ENCODE measurements at regions of chr2 and their contacts with region 1.

Region 1: GRCh38 chr2:12416600-12416999 is 300.1 kb upstream of the TRIB2 start:
- DNase-seq: peak in 8 of 9 donors; percentile 26 to 72 (median 64)
- ATAC-seq: peak; percentile 83
- H3K4me3 ChIP-seq: no peak overlapping the region
- H3K4me3 Mint-ChIP-seq: peak overlapping the region in 9 of 10 donors; percentile 18 to 75 (median 30)
- H3K27ac ChIP-seq: no peak overlapping the region
- H3K27ac Mint-ChIP-seq: peak overlapping the region; percentile 24 to 77 (median 52)
- H3K4me1 ChIP-seq: peaks cover 16 to 23% of the 10 kb centered on the region in 2 donors
- H3K4me1 Mint-ChIP-seq: peaks cover 27 to 82% (median 66%) of the 10 kb centered on the region in 7 donors
- H3K27me3 ChIP-seq: no peaks in the 10 kb centered on the region
- H3K27me3 Mint-ChIP-seq: no peaks in the 10 kb centered on the region

Region 2: GRCh38 chr2:11621410-11621809 is 795.2 kb before region 1 on chr2:
- CTCF ChIA-PET with region 1: no interaction called
- POLR2A ChIA-PET with region 1: no interaction called
- intact Hi-C with region 1: no loop called
- DNase-seq: no peak
- ATAC-seq: no peak
- H3K4me3 ChIP-seq: no peak overlapping the region
- H3K4me3 Mint-ChIP-seq: no peak overlapping the region
- H3K27ac ChIP-seq: no peak overlapping the region
- H3K27ac Mint-ChIP-seq: no peak overlapping the region
- H3K4me1 ChIP-seq: no peaks in the 10 kb centered on the region
- H3K4me1 Mint-ChIP-seq: no peaks in the 10 kb centered on the region
- H3K27me3 ChIP-seq: no peaks in the 10 kb centered on the region
- H3K27me3 Mint-ChIP-seq: no peaks in the 10 kb centered on the region

Region 3: DNA sequence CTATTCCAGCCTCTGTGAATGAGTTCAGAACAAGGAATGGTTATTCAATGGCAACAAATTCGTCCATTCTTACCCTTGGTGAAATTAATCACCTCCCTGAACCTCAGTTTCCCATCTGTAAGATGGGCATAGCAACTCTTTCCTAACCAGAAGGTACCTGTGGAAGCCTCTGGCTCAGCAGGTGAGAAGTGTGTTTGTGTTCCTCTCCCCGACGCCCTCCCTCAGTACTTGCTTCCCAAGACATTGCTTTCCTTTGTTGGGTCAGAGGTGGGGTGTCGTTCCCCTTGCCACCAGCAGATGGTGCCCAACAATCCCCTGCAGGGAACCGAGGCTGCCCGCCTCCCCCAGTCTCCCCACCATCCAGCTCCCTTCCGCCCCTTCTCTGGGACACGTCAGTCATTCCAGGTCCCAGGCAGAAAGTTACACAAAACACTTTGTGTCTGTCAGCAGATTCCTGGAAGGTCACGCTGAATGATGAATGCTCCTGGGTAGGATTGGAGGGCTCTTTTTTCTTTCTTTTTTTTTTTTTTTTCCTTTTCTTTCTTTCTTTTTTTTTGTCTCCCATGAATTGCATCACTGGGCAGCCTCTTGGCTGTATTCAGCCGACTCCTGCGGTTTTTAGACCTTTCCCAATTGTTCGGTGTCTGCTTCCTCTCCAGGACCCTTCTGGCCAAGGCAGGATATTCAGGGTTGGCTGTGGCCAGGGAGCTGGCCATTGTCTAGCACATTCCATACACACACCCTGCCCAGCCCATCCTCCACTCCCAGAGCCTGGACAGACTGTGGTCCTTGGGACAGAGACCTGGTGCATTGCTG is 552.9 kb before region 1 on chr2:
- CTCF ChIA-PET with region 1: interaction called, 7 read pairs
- POLR2A ChIA-PET with region 1: no interaction called
- intact Hi-C with region 1: loop called (anchors 1 to 10 kb)
- DNase-seq: peak; percentile 38 to 71 (median 57)
- ATAC-seq: peak; percentile 88
- H3K4me3 ChIP-seq: peak overlapping the region; percentile 14
- H3K4me3 Mint-ChIP-seq: peak overlapping the region; percentile 28 to 71 (median 54)
- H3K27ac ChIP-seq: no peak overlapping the region
- H3K27ac Mint-ChIP-seq: peak overlapping the region in 2 of 9 donors; percentile 13 to 22
- H3K4me1 ChIP-seq: peaks cover 0 to 7% of the 10 kb centered on the region in 2 donors
- H3K4me1 Mint-ChIP-seq: peaks cover 8 to 14% (median 11%) of the 10 kb centered on the region in 7 donors
- H3K27me3 ChIP-seq: no peaks in the 10 kb centered on the region
- H3K27me3 Mint-ChIP-seq: peaks cover 0 to 28% (median 0%) of the 10 kb centered on the region in 5 donors

Region 4: DNA sequence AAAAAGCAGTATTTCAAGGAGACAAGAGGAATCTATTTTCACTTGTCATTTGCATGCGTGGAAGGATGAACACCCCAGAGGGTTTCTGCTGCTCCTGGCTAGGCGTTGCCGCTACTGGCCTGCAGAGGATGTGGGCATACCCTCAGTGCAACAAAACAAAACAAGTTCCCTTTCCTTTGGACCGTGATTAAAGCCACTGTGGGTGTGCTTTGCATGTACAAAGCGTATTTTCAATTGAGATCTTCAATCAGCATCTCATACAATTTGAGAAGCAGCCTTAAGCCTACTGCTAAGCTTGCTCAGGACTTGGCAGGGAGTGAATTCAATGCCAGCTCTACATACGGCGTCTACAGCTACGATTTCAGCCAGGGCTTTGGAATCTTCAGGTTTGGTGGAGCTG is 371.7 kb before region 1 on chr2:
- CTCF ChIA-PET with region 1: no interaction called
- POLR2A ChIA-PET with region 1: no interaction called
- intact Hi-C with region 1: no loop called
- DNase-seq: peak in 6 of 9 donors; percentile 69 to 88 (median 80)
- ATAC-seq: peak; percentile 93
- H3K4me3 ChIP-seq: peak overlapping the region; percentile 2
- H3K4me3 Mint-ChIP-seq: peak overlapping the region; percentile 31 to 78 (median 62)
- H3K27ac ChIP-seq: peak overlapping the region; percentile 9
- H3K27ac Mint-ChIP-seq: peak overlapping the region; percentile 21 to 88 (median 78)
- H3K4me1 ChIP-seq: peaks cover 16 to 42% of the 10 kb centered on the region in 2 donors
- H3K4me1 Mint-ChIP-seq: peaks cover 16 to 80% (median 65%) of the 10 kb centered on the region in 7 donors
- H3K27me3 ChIP-seq: no peaks in the 10 kb centered on the region
- H3K27me3 Mint-ChIP-seq: peaks cover 0 to 19% (median 0%) of the 10 kb centered on the region in 5 donors

Region 5: DNA sequence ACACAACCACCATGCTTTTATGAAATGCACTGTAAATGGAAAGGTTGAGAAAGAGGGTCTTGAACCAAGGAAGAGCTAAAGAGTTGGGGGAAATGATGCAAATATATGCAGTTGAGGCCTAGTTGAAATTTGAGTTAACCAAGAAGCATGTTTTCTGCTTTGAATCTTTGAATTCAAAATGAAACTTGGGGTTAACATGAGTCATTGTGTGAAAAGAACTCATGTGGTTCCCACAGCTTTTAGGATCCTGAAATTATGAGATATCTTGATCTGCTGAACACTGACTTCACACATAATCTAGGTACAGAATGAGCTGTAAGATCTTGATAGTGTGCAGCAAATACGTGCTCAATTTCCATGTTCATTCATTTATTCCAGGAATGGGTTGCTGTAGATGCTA is 122.7 kb before region 1 on chr2:
- CTCF ChIA-PET with region 1: no interaction called
- POLR2A ChIA-PET with region 1: no interaction called
- intact Hi-C with region 1: loop called in 1 of 2 experiments (anchors 5 kb)
- DNase-seq: no peak
- ATAC-seq: peak; percentile 27
- H3K4me3 ChIP-seq: no peak overlapping the region
- H3K4me3 Mint-ChIP-seq: peak overlapping the region in 5 of 10 donors; percentile 13 to 75 (median 60)
- H3K27ac ChIP-seq: no peak overlapping the region
- H3K27ac Mint-ChIP-seq: peak overlapping the region in 4 of 9 donors; percentile 18 to 90 (median 68)
- H3K4me1 ChIP-seq: peaks cover 0 to 16% of the 10 kb centered on the region in 2 donors
- H3K4me1 Mint-ChIP-seq: peaks cover 19 to 53% (median 40%) of the 10 kb centered on the region in 7 donors
- H3K27me3 ChIP-seq: no peaks in the 10 kb centered on the region
- H3K27me3 Mint-ChIP-seq: peaks cover 0 to 4% (median 0%) of the 10 kb centered on the region in 5 donors

Region 6: GRCh38 chr2:12442476-12442847 is 25.9 kb after region 1 on chr2:
- CTCF ChIA-PET with region 1: no interaction called
- POLR2A ChIA-PET with region 1: no interaction called
- intact Hi-C with region 1: no loop called
- DNase-seq: no peak
- ATAC-seq: peak; percentile 50
- H3K4me3 ChIP-seq: no peak overlapping the region
- H3K4me3 Mint-ChIP-seq: peak overlapping the region in 1 of 10 donors; percentile 29
- H3K27ac ChIP-seq: no peak overlapping the region
- H3K27ac Mint-ChIP-seq: peak overlapping the region in 3 of 9 donors; percentile 12 to 65 (median 24)
- H3K4me1 ChIP-seq: peaks cover 10 to 12% of the 10 kb centered on the region in 2 donors
- H3K4me1 Mint-ChIP-seq: peaks cover 16 to 31% (median 24%) of the 10 kb centered on the region in 7 donors
- H3K27me3 ChIP-seq: no peaks in the 10 kb centered on the region
- H3K27me3 Mint-ChIP-seq: no peaks in the 10 kb centered on the region

Region 7: GRCh38 chr2:12456293-12457151 is 39.9 kb after region 1 on chr2:
- CTCF ChIA-PET with region 1: no interaction called
- POLR2A ChIA-PET with region 1: no interaction called
- intact Hi-C with region 1: loop called in 1 of 2 experiments (anchors 5 kb)
- DNase-seq: peak; percentile 23 to 52 (median 41)
- ATAC-seq: peak; percentile 88
- H3K4me3 ChIP-seq: peak overlapping the region; percentile 50
- H3K4me3 Mint-ChIP-seq: peak overlapping the region; percentile 66 to 89 (median 79)
- H3K27ac ChIP-seq: peak overlapping the region; percentile 59
- H3K27ac Mint-ChIP-seq: peak overlapping the region; percentile 82 to 99 (median 91)
- H3K4me1 ChIP-seq: peaks cover 15 to 20% of the 10 kb centered on the region in 2 donors
- H3K4me1 Mint-ChIP-seq: peaks cover 29 to 57% (median 39%) of the 10 kb centered on the region in 7 donors
- H3K27me3 ChIP-seq: no peaks in the 10 kb centered on the region
- H3K27me3 Mint-ChIP-seq: no peaks in the 10 kb centered on the region

Region 8: GRCh38 chr2:12606472-12607000 is 189.9 kb after region 1 on chr2:
- CTCF ChIA-PET with region 1: no interaction called
- POLR2A ChIA-PET with region 1: no interaction called
- intact Hi-C with region 1: loop called in 1 of 2 experiments (anchors 1 kb)
- DNase-seq: peak in 3 of 9 donors; percentile 3 to 26 (median 12)
- ATAC-seq: no peak
- H3K4me3 ChIP-seq: no peak overlapping the region
- H3K4me3 Mint-ChIP-seq: no peak overlapping the region
- H3K27ac ChIP-seq: no peak overlapping the region
- H3K27ac Mint-ChIP-seq: no peak overlapping the region
- H3K4me1 ChIP-seq: peaks cover 0 to 10% of the 10 kb centered on the region in 2 donors
- H3K4me1 Mint-ChIP-seq: peaks cover 7 to 37% (median 25%) of the 10 kb centered on the region in 7 donors
- H3K27me3 ChIP-seq: no peaks in the 10 kb centered on the region
- H3K27me3 Mint-ChIP-seq: peaks cover 0 to 16% (median 0%) of the 10 kb centered on the region in 5 donors

Region 9: DNA sequence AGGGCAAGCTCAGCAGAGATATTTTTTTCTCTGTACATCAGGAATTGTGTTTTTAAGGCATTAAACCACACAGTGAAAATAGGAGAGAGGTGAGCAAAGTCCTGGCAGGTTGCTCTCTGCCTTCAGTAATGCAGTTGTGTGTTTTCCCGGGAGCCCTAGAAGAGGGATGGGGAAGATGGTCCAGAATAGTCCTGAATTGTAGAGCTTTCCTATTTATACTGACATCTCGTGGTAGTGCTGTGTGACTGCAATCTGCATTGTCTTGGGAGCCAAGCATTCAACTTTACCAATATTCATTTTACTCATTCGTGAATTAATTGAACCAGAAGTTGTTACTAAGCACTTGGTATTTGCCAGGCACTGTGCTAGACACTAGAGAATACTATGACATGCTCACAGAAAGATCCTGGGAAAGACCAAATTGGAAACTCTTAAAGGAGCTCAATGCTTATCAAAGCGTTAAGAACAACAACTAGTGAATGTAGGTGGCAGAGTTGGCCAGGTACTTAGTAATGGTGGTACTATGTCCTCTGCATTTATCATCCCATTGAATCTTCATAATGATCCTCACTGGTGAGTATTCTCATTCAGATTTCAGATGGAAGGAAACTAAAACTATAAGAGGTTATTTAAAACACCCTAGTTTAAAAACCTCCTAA is 514.7 kb after region 1 on chr2:
- CTCF ChIA-PET with region 1: interaction called, 6 read pairs
- POLR2A ChIA-PET with region 1: no interaction called
- intact Hi-C with region 1: loop called in 1 of 2 experiments (anchors 1 kb)
- DNase-seq: peak in 4 of 9 donors; percentile 17 to 33 (median 26)
- ATAC-seq: peak; percentile 63
- H3K4me3 ChIP-seq: no peak overlapping the region
- H3K4me3 Mint-ChIP-seq: no peak overlapping the region
- H3K27ac ChIP-seq: no peak overlapping the region
- H3K27ac Mint-ChIP-seq: no peak overlapping the region
- H3K4me1 ChIP-seq: no peaks in the 10 kb centered on the region
- H3K4me1 Mint-ChIP-seq: peaks cover 0 to 12% (median 7%) of the 10 kb centered on the region in 7 donors
- H3K27me3 ChIP-seq: no peaks in the 10 kb centered on the region
- H3K27me3 Mint-ChIP-seq: peaks cover 0 to 50% (median 0%) of the 10 kb centered on the region in 5 donors